Activated CD4-positive, alpha-beta memory T cell treated with anti-CD3 and anti-CD28 coated beads, Interleukin-2, amount 10 ng/mL, durations not matched to agents 7 days and 5 days (primary cell): ENCODE measurements at regions of chr6 and their contacts with region 1.

Region 1: DNA sequence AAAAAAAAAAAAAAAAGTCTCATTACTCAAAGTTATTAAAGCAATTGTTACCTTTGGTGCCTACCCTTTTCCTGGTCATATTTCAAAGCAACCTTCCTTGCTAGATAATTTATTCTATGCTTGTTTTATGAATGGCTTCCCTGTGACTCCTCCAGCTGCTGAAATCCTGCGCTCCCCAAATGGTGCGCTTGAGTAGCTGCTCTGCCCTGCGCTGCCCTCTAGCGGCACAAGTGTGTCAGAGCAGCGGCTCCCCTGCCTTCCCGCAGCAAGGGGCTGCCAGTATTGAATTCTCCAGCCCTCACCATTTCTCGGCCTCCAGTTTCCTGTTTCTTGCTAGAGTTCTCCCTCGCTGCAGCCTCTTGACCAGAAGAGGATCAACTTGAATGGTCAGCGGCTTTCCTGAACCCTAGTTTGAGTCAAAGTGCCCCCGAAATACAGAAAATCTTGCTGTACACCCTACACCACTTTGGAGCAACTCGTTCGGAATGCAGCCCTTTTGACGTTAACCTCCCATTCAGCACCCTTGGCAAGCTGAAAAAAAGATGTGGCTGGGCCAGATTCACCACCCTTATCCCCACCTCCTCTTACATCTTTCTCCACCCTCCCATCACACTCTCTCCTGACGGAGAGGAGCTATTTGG is 60.4 kb upstream of the KLHL31 start:
- DNase-seq: peak; percentile 79
- H3K4me3 Mint-ChIP-seq: no peak overlapping the region
- H3K27ac Mint-ChIP-seq: no peak overlapping the region
- H3K4me1 Mint-ChIP-seq: peaks cover 8% of the 10 kb centered on the region
- H3K27me3 Mint-ChIP-seq: peaks cover 16% of the 10 kb centered on the region

Region 2: DNA sequence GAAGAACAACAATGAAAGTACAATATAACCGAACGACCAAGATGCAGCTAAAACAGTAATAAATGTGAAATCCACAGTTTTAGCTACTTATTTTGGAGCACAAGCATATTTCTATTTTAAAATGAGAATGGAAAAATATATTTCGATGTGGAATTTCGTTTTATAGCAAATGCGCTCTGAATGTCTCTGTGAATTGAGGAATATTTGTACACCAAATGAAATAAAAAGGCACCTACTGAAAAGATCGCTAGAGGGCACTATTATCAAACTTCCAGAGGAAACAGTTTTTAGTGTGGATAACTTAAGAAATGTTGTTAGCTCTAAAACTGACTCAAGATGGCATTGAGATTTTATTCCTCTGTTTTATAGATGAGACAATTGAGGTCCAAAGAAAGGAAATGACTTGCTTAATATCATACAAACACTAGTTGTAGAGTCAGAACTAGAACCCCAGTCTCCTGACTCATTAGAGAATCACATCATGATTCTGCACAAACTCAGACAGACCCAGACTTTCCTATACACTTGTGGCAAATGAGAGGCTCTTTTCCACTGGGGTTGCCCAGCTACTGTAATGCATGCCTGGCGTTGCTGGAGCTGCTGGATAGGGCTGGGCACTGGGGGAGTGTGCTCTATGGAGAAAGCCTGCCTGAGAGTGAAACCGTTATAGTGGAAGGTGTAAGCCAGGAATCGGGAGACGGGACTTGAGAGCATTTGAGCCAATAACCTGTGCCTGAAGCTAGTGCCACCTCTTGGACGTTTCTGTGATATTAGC is 232.9 kb before region 1 on chr6:
- CTCF ChIA-PET with region 1: interaction called, 128 read pairs
- POLR2A ChIA-PET with region 1: interaction called, 3 read pairs
- DNase-seq: peak; percentile 23
- H3K4me3 Mint-ChIP-seq: no peak overlapping the region
- H3K27ac Mint-ChIP-seq: no peak overlapping the region
- H3K4me1 Mint-ChIP-seq: peaks cover 12% of the 10 kb centered on the region
- H3K27me3 Mint-ChIP-seq: peaks cover 6% of the 10 kb centered on the region

Region 3: DNA sequence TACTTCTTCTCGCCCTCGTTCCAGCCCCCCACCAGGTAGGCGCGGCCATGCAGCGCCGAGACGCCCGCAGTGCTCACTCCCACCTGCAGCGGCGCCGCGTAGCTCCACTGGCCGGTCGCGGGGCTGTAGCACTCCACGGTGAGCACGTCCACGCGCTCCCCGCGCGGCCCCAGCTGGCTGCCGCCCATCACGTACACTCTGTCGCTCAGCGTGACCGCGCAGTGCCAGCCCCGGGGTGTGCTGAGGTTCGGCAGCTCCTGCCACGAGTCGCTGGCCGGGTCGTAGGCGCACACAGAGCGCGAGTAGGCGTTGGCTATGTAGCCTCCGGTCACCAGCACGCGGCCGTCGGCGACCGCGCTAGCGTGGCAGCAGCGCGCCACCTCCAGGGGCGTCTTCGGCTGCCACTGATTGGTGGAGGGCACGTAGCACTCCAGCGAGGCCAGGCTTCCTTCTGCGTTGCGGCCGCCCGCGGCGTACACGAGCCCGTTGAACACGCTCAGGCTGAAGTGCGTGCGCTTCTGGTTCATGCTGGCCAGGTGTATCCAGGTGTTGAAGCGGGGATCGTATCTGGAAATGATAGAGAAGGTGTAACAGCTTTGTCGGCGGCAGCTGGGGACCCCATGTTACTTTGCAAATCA is 74.0 kb before region 1 on chr6:
- CTCF ChIA-PET with region 1: interaction called, 12 read pairs
- POLR2A ChIA-PET with region 1: interaction called, 4 read pairs
- DNase-seq: peak; percentile 83
- H3K4me3 Mint-ChIP-seq: peak overlapping the region; percentile 90
- H3K27ac Mint-ChIP-seq: peak overlapping the region; percentile 77
- H3K4me1 Mint-ChIP-seq: peaks cover 33% of the 10 kb centered on the region
- H3K27me3 Mint-ChIP-seq: peaks cover 5% of the 10 kb centered on the region

Region 4: GRCh38 chr6:53707108-53707897 is 18.6 kb before region 1 on chr6:
- CTCF ChIA-PET with region 1: interaction called, 13 read pairs
- POLR2A ChIA-PET with region 1: no interaction called
- DNase-seq: no peak
- H3K4me3 Mint-ChIP-seq: no peak overlapping the region
- H3K27ac Mint-ChIP-seq: no peak overlapping the region
- H3K4me1 Mint-ChIP-seq: no peaks in the 10 kb centered on the region
- H3K27me3 Mint-ChIP-seq: peaks cover 14% of the 10 kb centered on the region

Region 5: GRCh38 chr6:53741034-53741823 is 15.3 kb after region 1 on chr6:
- CTCF ChIA-PET with region 1: interaction called, 57 read pairs
- POLR2A ChIA-PET with region 1: no interaction called
- DNase-seq: peak; percentile 49
- H3K4me3 Mint-ChIP-seq: peak overlapping the region; percentile 30
- H3K27ac Mint-ChIP-seq: peak overlapping the region; percentile 38
- H3K4me1 Mint-ChIP-seq: peaks cover 15% of the 10 kb centered on the region
- H3K27me3 Mint-ChIP-seq: peaks cover 2% of the 10 kb centered on the region

Region 6: DNA sequence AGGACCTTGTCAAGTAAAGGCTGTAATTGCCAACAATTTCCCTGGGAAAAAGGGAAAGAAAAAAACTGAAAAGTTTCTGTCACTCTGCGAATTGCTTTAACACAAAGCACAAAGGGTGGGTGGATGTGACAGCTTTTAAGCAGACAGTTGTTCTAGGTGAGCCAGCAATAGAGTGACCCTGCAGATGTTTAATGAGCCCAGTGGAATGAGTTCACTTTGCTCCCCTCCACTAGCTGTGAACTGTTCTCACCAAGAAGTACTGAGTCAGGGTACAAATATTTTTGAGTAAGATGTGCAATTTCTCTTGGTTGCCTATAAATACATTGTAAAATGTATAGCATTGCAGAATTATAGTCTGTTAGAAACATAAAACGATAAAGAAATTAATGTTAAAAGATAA is 42.7 kb after region 1 on chr6:
- CTCF ChIA-PET with region 1: no interaction called
- POLR2A ChIA-PET with region 1: no interaction called
- DNase-seq: no peak
- H3K4me3 Mint-ChIP-seq: no peak overlapping the region
- H3K27ac Mint-ChIP-seq: no peak overlapping the region
- H3K4me1 Mint-ChIP-seq: no peaks in the 10 kb centered on the region
- H3K27me3 Mint-ChIP-seq: peaks cover 7% of the 10 kb centered on the region

Region 7: DNA sequence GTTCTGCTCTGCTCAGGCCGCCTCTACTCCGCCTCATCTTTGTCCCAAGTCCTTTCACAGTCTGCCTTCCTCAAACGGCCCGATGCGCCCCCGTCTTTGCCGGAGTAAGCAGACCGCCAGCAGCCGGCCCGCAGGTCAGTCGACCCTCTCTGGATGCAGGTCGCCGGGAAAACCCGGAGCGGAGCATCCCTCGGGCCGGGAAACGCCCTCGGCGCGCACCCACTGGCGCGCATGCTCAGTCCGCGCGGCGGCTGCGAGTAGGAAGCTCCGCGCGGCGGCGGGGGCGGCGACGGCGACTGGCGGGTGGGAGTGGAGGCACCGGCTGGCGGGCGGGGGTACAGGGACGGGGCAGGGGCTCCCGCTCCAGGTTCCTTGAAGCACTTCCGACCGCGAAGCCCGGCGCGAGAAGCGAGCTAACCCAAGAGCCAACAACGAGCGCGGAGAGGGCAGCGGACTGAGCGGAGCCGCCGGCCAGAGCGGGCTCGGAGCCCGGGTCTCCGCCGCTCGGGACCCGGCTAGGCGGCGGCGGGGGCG is 68.9 kb after region 1 on chr6 and contains the start of gene LRRC1:
- CTCF ChIA-PET with region 1: interaction called, 17 read pairs
- POLR2A ChIA-PET with region 1: interaction called, 4 read pairs
- DNase-seq: peak; percentile 89
- H3K4me3 Mint-ChIP-seq: peak within 1 kb of the TSS; percentile 96
- H3K27ac Mint-ChIP-seq: peak within 1 kb of the TSS; percentile 83
- H3K4me1 Mint-ChIP-seq: peaks cover 34% of the 10 kb centered on the region
- H3K27me3 Mint-ChIP-seq: peaks cover 41% of the 10 kb centered on the region
- total RNA-seq, gene LRRC1: 4.0 to 4.1 TPM

Region 8: GRCh38 chr6:53822401-53823125 is 96.7 kb after region 1 on chr6:
- CTCF ChIA-PET with region 1: no interaction called
- POLR2A ChIA-PET with region 1: no interaction called
- DNase-seq: no peak
- H3K4me3 Mint-ChIP-seq: no peak overlapping the region
- H3K27ac Mint-ChIP-seq: no peak overlapping the region
- H3K4me1 Mint-ChIP-seq: peaks cover 2% of the 10 kb centered on the region
- H3K27me3 Mint-ChIP-seq: no peaks in the 10 kb centered on the region